ENCODE measurements at regions of chr1 and their contacts with region 1.

Region 1: GRCh38 chr1:61270761-61271411 is 188.5 kb downstream of the NFIA start:
- DNase-seq: peak; percentile 24
- H3K4me3 Mint-ChIP-seq: no peak overlapping the region
- H3K27ac Mint-ChIP-seq: peak overlapping the region; percentile 37
- H3K4me1 Mint-ChIP-seq: peaks cover 18% of the 10 kb centered on the region
- H3K27me3 Mint-ChIP-seq: peaks cover 7% of the 10 kb centered on the region

Region 2: GRCh38 chr1:61244114-61244513 is 26.8 kb before region 1 on chr1:
- CTCF ChIA-PET with region 1: no interaction called
- intact Hi-C with region 1: no loop called
- DNase-seq: no peak
- H3K4me3 Mint-ChIP-seq: no peak overlapping the region
- H3K27ac Mint-ChIP-seq: no peak overlapping the region
- H3K4me1 Mint-ChIP-seq: no peaks in the 10 kb centered on the region
- H3K27me3 Mint-ChIP-seq: no peaks in the 10 kb centered on the region

Region 3: DNA sequence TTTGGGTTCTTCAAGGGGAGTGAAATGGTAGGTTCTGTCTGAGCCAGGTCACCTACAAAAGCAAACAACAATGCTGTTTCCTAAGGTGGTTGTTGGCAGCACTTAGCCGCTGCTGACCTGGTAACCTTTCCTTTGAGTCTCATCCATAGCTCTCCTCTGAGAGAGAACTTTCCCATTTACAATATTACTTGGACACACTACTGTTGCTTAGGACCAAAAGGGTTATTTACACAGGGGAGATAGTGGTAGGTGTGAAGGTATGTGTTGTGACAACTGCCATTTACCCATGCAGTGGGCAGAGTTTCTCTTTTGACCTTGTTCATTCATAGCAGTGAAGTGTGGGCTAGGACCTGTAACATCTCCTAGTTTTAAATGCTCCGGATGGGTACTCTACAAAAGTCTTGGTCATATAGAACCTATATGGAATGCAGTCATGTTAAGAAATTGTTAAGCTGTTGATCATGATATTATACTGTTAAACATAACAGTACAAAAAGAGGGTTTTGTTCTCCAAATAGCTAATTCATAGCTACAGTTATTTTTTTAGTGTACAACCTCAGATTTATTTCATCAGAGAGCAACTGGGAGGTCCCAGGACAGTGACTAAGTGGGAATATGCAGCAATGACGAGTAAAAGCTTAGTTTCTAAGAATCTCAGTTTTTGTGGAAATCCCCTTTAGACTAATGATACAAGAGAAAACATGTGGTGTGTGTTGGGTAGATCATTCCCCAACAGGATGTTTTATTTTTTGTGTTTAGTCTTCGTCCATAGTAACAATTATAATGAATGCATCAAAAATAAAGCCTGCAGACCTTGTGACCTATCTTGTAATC is 31.2 kb after region 1 on chr1:
- CTCF ChIA-PET with region 1: interaction called, 3 read pairs
- intact Hi-C with region 1: loop called (anchors 1 kb)
- DNase-seq: peak; percentile 60
- H3K4me3 Mint-ChIP-seq: no peak overlapping the region
- H3K27ac Mint-ChIP-seq: peak overlapping the region; percentile 65
- H3K4me1 Mint-ChIP-seq: peaks cover 19% of the 10 kb centered on the region
- H3K27me3 Mint-ChIP-seq: peaks cover 24% of the 10 kb centered on the region

Region 4: GRCh38 chr1:61332196-61332753 is 61.4 kb after region 1 on chr1:
- CTCF ChIA-PET with region 1: no interaction called
- intact Hi-C with region 1: loop called (anchors 1 kb)
- DNase-seq: peak; percentile 26
- H3K4me3 Mint-ChIP-seq: no peak overlapping the region
- H3K27ac Mint-ChIP-seq: no peak overlapping the region
- H3K4me1 Mint-ChIP-seq: peaks cover 8% of the 10 kb centered on the region
- H3K27me3 Mint-ChIP-seq: no peaks in the 10 kb centered on the region

Region 5: GRCh38 chr1:61904354-61904753 is 633.5 kb after region 1 on chr1:
- CTCF ChIA-PET with region 1: no interaction called
- intact Hi-C with region 1: no loop called
- DNase-seq: no peak
- H3K4me3 Mint-ChIP-seq: no peak overlapping the region
- H3K27ac Mint-ChIP-seq: no peak overlapping the region
- H3K4me1 Mint-ChIP-seq: no peaks in the 10 kb centered on the region
- H3K27me3 Mint-ChIP-seq: no peaks in the 10 kb centered on the region

Measured in activated naive CD4-positive, alpha-beta T cell treated with anti-CD3 and anti-CD28 coated beads for 36 hours (primary cell).